ENCODE measurements at regions of chr1 and their contacts with region 1.

Region 1: DNA sequence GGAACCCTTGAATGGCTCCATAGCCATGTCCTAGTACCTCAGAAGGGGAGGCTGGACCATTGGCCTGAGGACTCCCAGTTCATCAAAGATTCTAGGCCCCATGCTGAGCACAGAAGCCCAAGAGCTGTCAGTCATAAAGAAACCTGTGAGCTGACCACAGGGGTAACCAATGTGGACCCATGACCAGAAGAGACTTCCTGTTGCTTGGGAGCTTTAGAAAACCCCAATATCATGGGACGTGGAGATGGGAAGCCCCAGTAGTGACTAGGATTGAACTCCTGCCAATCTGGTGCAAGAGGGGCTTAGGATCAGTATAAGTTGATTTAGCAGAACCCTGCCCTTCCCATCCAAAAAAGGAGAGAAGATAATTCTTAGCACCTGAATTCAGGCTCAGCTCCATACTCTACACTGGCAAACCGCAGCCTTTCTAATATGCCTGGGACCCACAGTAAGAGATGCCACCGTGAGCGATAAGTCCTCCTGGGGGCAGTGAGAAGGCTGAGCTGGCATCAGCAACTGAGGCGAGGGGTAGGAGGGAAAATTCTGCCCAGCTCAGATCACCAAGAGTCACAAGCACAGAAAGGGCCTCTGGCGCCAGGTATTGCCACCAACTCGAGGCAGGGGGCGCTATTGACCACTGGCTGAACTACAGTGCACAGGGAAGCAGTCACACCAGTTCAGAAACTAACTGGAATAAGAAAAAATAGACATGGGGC is 108.9 kb downstream of the CAPN8 start:
- DNase-seq: peak; percentile 46
- H3K4me3 ChIP-seq: no peak overlapping the region
- H3K27ac ChIP-seq: no peak overlapping the region
- H3K4me1 ChIP-seq: no peaks in the 10 kb centered on the region
- H3K27me3 ChIP-seq: no peaks in the 10 kb centered on the region
- CTCF ChIP-seq: peak; percentile 60 to 75
- POLR2A ChIP-seq: no peak

Region 2: GRCh38 chr1:223538981-223539380 is 17.6 kb before region 1 on chr1:
- CTCF ChIA-PET with region 1: interaction called, 19 read pairs
- POLR2A ChIA-PET with region 1: no interaction called
- dilution Hi-C with region 1: no loop called
- intact Hi-C with region 1: no loop called
- DNase-seq: no peak
- H3K4me3 ChIP-seq: no peak overlapping the region
- H3K27ac ChIP-seq: no peak overlapping the region
- H3K4me1 ChIP-seq: no peaks in the 10 kb centered on the region
- H3K27me3 ChIP-seq: no peaks in the 10 kb centered on the region
- CTCF ChIP-seq: no peak
- POLR2A ChIP-seq: no peak

Region 3: DNA sequence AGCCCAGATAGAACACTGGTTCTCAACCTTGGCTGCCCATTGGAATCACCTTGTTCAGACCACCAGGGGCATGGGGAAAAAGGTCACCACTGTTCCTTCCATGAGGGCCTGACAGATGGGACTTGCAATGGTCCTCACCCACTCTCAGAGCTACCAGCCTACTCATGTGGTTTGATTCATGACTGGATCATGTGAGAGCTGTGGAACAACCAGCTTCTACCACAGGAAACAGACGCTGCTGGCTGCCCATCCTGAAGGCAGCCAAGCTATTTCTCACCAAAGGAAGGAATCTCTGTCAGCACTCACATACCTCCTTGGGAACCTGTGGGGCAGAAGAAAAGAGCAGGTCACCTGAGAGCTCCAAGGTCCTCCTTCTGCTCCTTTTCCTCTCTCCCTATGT is 55.4 kb after region 1 on chr1:
- CTCF ChIA-PET with region 1: interaction called, 97 read pairs
- POLR2A ChIA-PET with region 1: no interaction called
- dilution Hi-C with region 1: no loop called
- intact Hi-C with region 1: no loop called
- DNase-seq: peak; percentile 61
- H3K4me3 ChIP-seq: no peak overlapping the region
- H3K27ac ChIP-seq: no peak overlapping the region
- H3K4me1 ChIP-seq: no peaks in the 10 kb centered on the region
- H3K27me3 ChIP-seq: no peaks in the 10 kb centered on the region
- CTCF ChIP-seq: no peak
- POLR2A ChIP-seq: no peak

Region 4: GRCh38 chr1:223617323-223618070 is 60.9 kb after region 1 on chr1:
- CTCF ChIA-PET with region 1: interaction called, 97 read pairs
- POLR2A ChIA-PET with region 1: no interaction called
- dilution Hi-C with region 1: no loop called
- intact Hi-C with region 1: no loop called
- DNase-seq: peak; percentile 72
- H3K4me3 ChIP-seq: no peak overlapping the region
- H3K27ac ChIP-seq: no peak overlapping the region
- H3K4me1 ChIP-seq: no peaks in the 10 kb centered on the region
- H3K27me3 ChIP-seq: no peaks in the 10 kb centered on the region
- CTCF ChIP-seq: no peak
- POLR2A ChIP-seq: no peak

Region 5: GRCh38 chr1:223683586-223684487 is 127.3 kb after region 1 on chr1:
- CTCF ChIA-PET with region 1: interaction called, 30 read pairs
- POLR2A ChIA-PET with region 1: no interaction called
- dilution Hi-C with region 1: no loop called
- intact Hi-C with region 1: no loop called
- DNase-seq: peak; percentile 55
- H3K4me3 ChIP-seq: no peak overlapping the region
- H3K27ac ChIP-seq: no peak overlapping the region
- H3K4me1 ChIP-seq: no peaks in the 10 kb centered on the region
- H3K27me3 ChIP-seq: peaks cover 9 to 24% of the 10 kb centered on the region in 2 experiments
- CTCF ChIP-seq: peak; percentile 54 to 68
- POLR2A ChIP-seq: no peak

Region 6: DNA sequence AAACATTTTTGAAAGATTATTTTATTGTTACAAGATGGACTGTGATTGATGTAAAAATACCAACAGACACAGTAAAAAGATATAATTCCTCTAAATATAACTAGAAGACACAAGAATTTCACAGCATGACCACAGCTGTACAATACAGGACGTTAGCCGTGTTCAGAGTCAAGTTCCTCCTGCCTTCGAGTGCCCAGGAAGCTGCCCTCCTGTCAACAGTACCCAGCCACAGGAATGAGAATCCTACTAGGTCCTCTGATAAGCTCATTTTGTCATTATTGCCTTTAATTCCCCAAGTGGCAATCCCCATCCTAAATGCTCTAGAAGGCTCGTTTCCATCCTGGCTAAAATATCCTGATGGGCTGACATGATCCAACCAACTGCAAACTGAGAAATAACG is 139.4 kb after region 1 on chr1:
- CTCF ChIA-PET with region 1: interaction called, 13 read pairs
- POLR2A ChIA-PET with region 1: no interaction called
- dilution Hi-C with region 1: no loop called
- intact Hi-C with region 1: no loop called
- DNase-seq: no peak
- H3K4me3 ChIP-seq: no peak overlapping the region
- H3K27ac ChIP-seq: no peak overlapping the region
- H3K4me1 ChIP-seq: peaks cover 10% of the 10 kb centered on the region
- H3K27me3 ChIP-seq: no peaks in the 10 kb centered on the region
- CTCF ChIP-seq: no peak
- POLR2A ChIP-seq: no peak

Measured in endothelial cell of umbilical vein (primary cell).